ENCODE measurements at regions of chr18 and their contacts with region 1.

Region 1: DNA sequence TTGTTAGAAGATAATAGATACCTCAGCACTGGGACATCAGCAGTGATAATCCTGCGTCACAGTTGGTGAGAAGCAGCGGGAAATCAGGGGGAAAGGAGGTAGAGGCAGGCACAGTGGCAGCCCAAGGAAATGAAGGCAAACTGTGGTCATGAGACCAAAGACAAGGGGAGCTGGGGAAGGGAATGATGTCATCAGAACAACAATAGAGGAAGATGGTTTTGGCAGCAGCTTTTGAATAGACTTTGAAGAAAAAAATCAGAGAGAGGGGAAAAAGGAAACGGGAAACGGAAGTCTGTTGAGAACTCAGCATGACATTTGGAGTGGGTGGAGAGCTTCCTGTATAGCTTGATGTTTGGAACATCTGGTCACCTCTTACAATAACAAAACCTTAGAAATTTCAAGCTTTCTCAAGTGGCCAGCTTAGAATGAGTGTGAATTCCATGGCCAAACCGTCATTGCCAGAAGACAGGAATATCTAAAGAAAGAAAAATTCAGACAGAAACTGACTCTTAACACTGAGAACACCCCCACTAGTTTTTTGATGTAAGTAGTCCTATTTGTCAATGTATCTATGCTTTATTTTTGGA is 18.4 kb upstream of the YES1 start:
- DNase-seq: no peak
- H3K4me3 ChIP-seq: no peak overlapping the region
- H3K27ac ChIP-seq: peak overlapping the region in 2 of 3 donors; percentile 20 to 29
- H3K4me1 ChIP-seq: peaks cover 0 to 8% of the 10 kb centered on the region in 2 donors
- H3K27me3 ChIP-seq: no peaks in the 10 kb centered on the region
- CTCF ChIP-seq: no peak
- POLR2A ChIP-seq: no peak

Region 2: DNA sequence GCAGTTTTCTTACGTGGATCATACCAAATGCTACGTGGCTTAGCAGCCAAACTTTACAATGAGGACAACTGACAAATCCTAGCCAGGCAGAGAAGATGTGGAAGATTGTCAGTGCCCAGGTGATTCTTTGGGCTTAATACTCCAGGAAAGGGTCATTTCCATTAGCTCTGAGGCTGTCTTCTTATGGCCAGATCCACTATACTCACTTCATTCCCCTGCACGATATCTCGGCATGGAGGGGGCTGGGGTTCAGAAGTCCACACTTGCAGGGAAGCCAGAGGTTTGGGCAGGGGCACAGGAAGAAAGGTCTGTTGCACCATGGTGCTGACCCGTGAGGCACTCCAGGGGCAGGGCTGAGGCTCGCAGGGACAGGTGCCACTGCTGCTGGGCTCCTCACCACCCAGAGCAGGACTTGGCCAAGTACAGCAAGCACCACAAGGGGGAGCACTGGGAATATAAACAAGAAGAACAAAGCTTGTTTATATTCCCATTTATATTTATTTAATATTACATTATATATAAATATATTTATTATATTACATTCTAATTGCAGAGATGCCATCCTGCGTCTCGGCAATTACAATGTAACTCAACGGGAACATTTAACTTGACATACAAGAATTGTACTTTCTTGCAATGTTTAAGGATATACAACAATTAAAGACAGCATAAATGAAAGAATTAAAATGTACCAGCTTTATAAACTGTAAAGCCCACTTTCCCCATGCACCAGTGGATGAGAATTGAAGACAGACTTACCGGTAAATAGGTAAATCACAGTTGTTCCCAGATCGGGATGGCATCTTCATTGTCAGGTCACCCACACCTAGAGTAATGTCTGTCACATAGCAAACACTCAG is 206.4 kb before region 1 on chr18:
- intact Hi-C with region 1: loop called (anchors 5 kb)
- DNase-seq: peak; percentile 65 to 75
- H3K4me3 ChIP-seq: no peak overlapping the region
- H3K27ac ChIP-seq: no peak overlapping the region
- H3K4me1 ChIP-seq: no peaks in the 10 kb centered on the region
- H3K27me3 ChIP-seq: no peaks in the 10 kb centered on the region
- CTCF ChIP-seq: peak; percentile 12 to 73 (median 40)
- POLR2A ChIP-seq: no peak

Region 3: DNA sequence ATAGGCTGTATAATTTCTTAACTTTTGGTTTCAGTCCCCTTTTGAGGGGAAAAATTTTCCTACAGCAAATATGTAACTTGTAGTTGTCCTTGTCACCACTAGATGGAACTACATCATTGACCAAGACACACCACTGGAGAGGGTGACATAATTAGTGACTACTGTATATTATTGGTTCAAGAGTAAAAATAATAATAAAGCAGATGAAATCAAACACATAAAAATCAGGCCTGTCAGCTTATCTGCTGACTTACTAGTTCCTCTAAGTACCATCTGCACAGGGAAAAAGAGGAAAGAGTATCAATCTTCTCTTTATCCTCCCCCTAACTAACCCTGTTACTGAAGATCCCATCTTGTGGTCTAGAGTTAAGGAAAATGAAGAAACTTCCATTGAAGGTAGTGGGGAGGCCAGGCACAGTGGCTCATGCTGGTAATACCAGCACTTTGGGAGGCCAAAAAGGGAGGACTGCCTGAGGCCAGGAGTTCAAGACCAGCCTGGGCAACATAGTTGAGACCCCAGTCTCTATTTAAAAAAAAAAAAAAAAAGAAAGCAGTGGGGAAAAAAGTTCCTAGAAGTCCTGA is 88.4 kb before region 1 on chr18:
- intact Hi-C with region 1: loop called (anchors 5 kb)
- DNase-seq: no peak
- H3K4me3 ChIP-seq: no peak overlapping the region
- H3K27ac ChIP-seq: no peak overlapping the region
- H3K4me1 ChIP-seq: no peaks in the 10 kb centered on the region
- H3K27me3 ChIP-seq: no peaks in the 10 kb centered on the region
- CTCF ChIP-seq: peak; percentile 44 to 87 (median 72)
- POLR2A ChIP-seq: no peak

Measured in thyroid gland (tissue), 4 donors.